CD8-positive, alpha-beta T cell (primary cell): ENCODE measurements at regions of chr1 and their contacts with region 1.

Region 1: GRCh38 chr1:12407050-12407961 is 177.5 kb downstream of the VPS13D start:
- DNase-seq: peak in 3 of 9 experiments; percentile 19 to 65 (median 50)
- ATAC-seq: peak; percentile 55
- H3K4me3 ChIP-seq: no peak overlapping the region
- H3K4me3 Mint-ChIP-seq: no peak overlapping the region
- H3K27ac ChIP-seq: no peak overlapping the region
- H3K27ac Mint-ChIP-seq: no peak overlapping the region
- H3K4me1 ChIP-seq: peaks cover 8% of the 10 kb centered on the region
- H3K4me1 Mint-ChIP-seq: peaks cover 20% of the 10 kb centered on the region
- H3K27me3 ChIP-seq: no peaks in the 10 kb centered on the region
- H3K27me3 Mint-ChIP-seq: no peaks in the 10 kb centered on the region
- CTCF ChIP-seq: peak; percentile 41

Region 2: GRCh38 chr1:12472798-12473551 is 65.7 kb after region 1 on chr1:
- CTCF ChIA-PET with region 1: interaction called, 10 read pairs
- POLR2A ChIA-PET with region 1: interaction called, 4 read pairs
- intact Hi-C with region 1: loop called in 1 of 2 experiments (anchors 10 kb)
- DNase-seq: peak; percentile 14 to 78 (median 68)
- ATAC-seq: peak; percentile 73
- H3K4me3 ChIP-seq: peak overlapping the region; percentile 6 to 25
- H3K4me3 Mint-ChIP-seq: peak overlapping the region; percentile 78
- H3K27ac ChIP-seq: peak overlapping the region; percentile 49 to 88
- H3K27ac Mint-ChIP-seq: peak overlapping the region; percentile 97
- H3K4me1 ChIP-seq: peaks cover 84% of the 10 kb centered on the region
- H3K4me1 Mint-ChIP-seq: peaks cover 90% of the 10 kb centered on the region
- H3K27me3 ChIP-seq: no peaks in the 10 kb centered on the region
- H3K27me3 Mint-ChIP-seq: no peaks in the 10 kb centered on the region
- CTCF ChIP-seq: no peak

Region 3: DNA sequence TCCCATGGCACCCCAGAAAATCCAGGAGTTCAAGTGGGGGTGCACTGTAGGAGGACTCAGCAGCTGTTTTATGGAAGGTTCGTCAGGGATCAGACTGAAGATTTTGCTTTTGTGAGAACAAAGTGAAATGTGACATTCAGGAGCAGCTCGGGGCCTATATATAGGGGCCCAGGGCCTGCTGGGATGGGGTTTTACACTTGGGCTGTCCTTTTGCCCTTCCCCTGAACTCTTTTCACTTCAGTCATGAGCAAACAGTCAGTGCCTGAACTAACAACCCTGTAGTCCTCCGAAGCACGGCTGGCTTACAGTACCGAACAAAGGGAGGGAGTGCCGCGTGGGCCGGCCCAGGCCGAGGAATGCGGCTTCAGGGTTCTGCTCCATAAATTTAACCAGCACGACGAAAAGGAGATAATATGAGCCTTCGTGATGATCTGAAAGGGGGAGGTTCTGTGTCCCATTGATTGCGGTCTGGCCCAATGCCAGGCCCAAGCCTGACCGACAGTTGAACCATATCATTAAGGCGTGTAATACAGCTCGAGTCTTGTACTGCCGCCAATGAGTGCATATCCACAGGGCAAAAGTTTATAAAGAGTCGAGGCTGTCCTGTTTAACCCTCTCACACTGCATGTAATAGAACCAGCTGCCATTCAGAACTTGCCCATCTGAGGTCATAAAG is 70.8 kb after region 1 on chr1:
- CTCF ChIA-PET with region 1: interaction called, 10 read pairs
- POLR2A ChIA-PET with region 1: interaction called, 4 read pairs
- intact Hi-C with region 1: loop called in 1 of 2 experiments (anchors 10 kb)
- DNase-seq: peak in 2 of 9 experiments; percentile 40 to 54
- ATAC-seq: peak; percentile 19
- H3K4me3 ChIP-seq: no peak overlapping the region
- H3K4me3 Mint-ChIP-seq: peak overlapping the region; percentile 72
- H3K27ac ChIP-seq: peak overlapping the region; percentile 6 to 63
- H3K27ac Mint-ChIP-seq: peak overlapping the region; percentile 97
- H3K4me1 ChIP-seq: peaks cover 90% of the 10 kb centered on the region
- H3K4me1 Mint-ChIP-seq: peaks cover 90% of the 10 kb centered on the region
- H3K27me3 ChIP-seq: no peaks in the 10 kb centered on the region
- H3K27me3 Mint-ChIP-seq: no peaks in the 10 kb centered on the region
- CTCF ChIP-seq: no peak

Region 4: DNA sequence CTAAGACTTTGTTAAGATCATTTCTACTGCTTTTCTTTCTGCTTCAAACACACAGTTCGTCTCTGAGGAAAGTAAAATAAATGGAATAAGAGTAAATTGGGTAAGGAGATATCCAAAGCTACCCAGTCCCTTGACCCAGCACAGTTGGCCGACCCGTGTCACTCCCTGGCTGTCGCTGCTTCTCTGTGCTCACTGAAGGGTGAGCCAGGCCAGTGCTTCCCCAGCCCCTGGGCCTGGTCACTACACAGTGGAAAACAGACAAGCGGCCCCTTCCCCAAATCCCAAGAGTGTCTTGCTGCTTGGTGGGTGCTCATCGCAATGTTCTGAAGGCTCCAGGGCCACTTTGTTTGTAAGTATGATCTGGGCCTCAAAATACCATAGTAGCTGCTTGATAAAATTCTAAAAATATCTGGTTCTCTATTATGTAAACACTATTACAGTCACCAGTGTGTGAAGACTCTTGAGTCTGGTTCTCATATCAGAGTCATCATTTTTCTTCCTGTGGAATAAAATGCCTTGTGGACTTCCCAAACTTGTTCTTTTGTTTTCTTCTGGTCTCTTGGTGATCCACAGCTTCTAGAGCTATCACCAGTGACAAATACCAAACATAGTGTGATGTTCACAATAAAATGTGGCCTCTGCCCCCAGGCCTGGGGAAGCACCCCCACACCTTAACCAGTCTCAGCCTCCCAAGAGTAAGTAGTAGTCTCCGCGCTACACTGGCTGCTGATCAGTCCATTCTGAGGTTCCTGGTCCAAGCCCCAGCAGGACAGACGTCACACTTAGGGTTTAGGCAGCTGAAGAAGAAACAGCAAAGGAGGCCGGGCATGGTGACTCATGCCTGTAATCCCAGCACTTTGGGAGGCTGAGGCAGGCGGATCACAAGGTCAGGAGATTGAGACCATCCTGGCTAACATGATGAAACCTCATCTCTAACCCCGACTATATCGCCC is 104.5 kb after region 1 on chr1:
- CTCF ChIA-PET with region 1: no interaction called
- POLR2A ChIA-PET with region 1: no interaction called
- intact Hi-C with region 1: loop called (anchors 5 to 10 kb)
- DNase-seq: no peak
- ATAC-seq: no peak
- H3K4me3 ChIP-seq: peak overlapping the region in 1 of 2 experiments; percentile 20
- H3K4me3 Mint-ChIP-seq: peak overlapping the region; percentile 75
- H3K27ac ChIP-seq: peak overlapping the region; percentile 64 to 77
- H3K27ac Mint-ChIP-seq: peak overlapping the region; percentile 98
- H3K4me1 ChIP-seq: peaks cover 34% of the 10 kb centered on the region
- H3K4me1 Mint-ChIP-seq: peaks cover 52% of the 10 kb centered on the region
- H3K27me3 ChIP-seq: no peaks in the 10 kb centered on the region
- H3K27me3 Mint-ChIP-seq: no peaks in the 10 kb centered on the region
- CTCF ChIP-seq: no peak

Region 5: DNA sequence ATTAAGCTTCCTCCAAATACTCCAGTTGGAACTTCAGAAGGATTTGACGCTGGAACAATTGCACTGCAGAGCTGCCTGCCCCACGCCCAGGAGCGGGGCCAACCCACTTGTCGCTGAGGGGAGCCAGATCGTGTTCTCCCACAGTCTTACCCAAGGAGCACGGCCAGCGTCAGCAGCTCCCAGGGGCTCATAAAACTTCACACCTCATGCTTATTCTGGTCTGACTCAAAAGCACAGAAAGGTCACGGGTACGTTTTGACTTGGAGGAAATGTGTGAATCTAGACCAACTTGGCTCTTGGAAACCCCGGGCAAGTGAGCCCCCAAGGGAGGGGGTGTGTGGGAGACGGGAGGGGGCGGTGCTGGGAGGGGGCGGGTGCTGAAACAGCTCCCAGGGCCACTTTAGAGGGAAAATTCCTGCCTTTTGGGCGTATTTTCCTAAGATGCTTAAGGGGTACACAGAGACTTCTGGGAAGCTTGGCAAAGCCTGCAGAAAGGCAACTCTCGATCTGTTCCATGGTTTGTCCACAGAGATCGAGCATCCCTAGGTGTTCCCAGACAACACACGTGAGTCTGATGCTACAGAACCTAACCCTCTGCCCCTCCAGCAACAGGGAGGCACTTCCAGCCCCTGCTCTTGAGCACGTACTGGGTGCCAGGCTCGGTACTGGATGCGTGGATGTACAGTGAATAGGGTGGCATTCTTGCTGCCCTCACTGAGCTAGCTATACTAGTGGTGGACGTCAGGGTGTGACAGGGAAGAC is 111.8 kb after region 1 on chr1:
- CTCF ChIA-PET with region 1: no interaction called
- POLR2A ChIA-PET with region 1: no interaction called
- intact Hi-C with region 1: loop called (anchors 5 to 10 kb)
- DNase-seq: peak in 2 of 9 experiments; percentile 14 to 27
- ATAC-seq: peak; percentile 46
- H3K4me3 ChIP-seq: no peak overlapping the region
- H3K4me3 Mint-ChIP-seq: no peak overlapping the region
- H3K27ac ChIP-seq: no peak overlapping the region
- H3K27ac Mint-ChIP-seq: no peak overlapping the region
- H3K4me1 ChIP-seq: no peaks in the 10 kb centered on the region
- H3K4me1 Mint-ChIP-seq: peaks cover 18% of the 10 kb centered on the region
- H3K27me3 ChIP-seq: no peaks in the 10 kb centered on the region
- H3K27me3 Mint-ChIP-seq: no peaks in the 10 kb centered on the region
- CTCF ChIP-seq: no peak

Region 6: DNA sequence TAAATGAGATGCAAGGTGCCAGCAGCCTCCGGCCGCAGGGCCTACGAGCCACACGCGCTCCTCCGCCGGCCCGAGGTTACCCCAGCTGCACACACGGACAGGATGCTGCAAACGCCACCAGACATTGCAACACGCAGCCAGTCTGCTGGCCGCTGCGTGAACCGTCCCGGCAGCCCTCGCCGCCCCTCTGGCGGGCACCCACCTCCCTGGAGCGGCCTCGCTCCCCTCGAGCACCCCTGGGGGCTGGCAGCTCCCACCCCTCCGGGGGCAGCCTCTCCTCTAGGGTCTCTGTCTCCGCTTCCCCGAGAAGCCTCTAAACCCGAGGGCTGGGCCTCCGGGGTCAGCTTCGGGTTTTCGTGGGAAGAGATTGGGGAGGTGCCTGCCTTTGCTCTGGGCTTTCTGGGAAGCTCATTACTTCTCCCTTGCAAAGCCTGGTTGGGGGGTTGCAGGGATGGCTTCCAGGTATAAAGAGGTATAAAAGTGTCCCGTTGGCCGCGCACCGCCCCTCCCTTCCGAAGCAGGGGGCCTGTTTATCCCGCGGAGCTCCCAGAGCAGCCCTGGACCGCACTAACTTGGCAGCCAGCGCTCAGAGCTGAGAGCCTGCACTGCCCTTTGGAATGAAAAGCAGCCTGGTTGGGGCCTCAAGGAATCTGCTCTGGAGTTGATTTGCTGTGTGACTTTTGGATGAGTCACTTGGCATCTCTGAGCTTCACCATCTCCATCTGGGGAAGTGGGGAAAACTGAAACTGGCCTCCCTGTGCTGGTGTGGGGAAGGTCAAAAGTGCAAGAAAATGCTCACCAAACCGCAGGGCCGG is 188.9 kb after region 1 on chr1:
- CTCF ChIA-PET with region 1: interaction called, 13 read pairs
- POLR2A ChIA-PET with region 1: interaction called, 4 read pairs
- intact Hi-C with region 1: loop called in 1 of 2 experiments (anchors 1 kb)
- DNase-seq: peak in 4 of 9 experiments; percentile 31 to 54 (median 37)
- ATAC-seq: peak; percentile 7
- H3K4me3 ChIP-seq: no peak overlapping the region
- H3K4me3 Mint-ChIP-seq: peak overlapping the region; percentile 56
- H3K27ac ChIP-seq: no peak overlapping the region
- H3K27ac Mint-ChIP-seq: peak overlapping the region; percentile 49
- H3K4me1 ChIP-seq: peaks cover 20% of the 10 kb centered on the region
- H3K4me1 Mint-ChIP-seq: peaks cover 42% of the 10 kb centered on the region
- H3K27me3 ChIP-seq: no peaks in the 10 kb centered on the region
- H3K27me3 Mint-ChIP-seq: no peaks in the 10 kb centered on the region
- CTCF ChIP-seq: no peak

Region 7: DNA sequence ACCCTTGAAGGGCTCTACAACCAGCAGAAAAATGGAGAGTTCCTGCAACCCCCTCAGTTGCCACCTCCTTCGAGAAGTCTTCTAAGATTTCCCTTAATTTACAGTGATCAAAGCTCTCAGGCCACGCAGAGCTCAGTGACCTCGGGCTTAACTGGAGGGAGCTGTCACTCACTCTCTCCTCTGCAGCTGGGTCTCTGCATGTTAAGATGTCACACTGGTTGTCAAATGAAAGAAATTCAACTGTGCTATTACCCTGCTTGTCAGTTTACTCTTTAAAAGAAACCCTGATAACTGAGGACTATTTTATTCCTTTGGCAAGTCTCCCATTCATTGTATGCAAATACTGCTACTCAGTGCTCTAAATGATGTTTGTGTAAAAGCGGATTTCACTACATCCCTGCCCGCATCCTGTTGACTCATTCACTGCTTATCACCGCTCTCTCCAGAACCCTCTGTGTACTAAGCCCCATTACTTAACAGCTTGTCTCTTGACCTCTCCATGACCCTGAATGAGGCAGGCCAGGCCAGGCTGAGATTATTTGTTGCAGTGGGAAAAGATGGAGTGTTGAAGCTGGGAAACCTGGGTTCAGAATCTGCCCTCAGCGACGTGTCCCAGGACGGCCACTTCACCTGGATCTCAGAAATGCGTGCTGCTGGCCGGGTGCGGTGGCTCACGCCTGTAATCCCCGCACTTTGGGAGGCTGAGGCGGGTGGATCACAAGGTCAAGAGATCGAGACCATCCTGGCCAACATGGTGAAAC is 197.0 kb after region 1 on chr1:
- CTCF ChIA-PET with region 1: interaction called, 8 read pairs
- POLR2A ChIA-PET with region 1: interaction called, 4 read pairs
- intact Hi-C with region 1: loop called in 1 of 2 experiments (anchors 1 kb)
- DNase-seq: peak in 8 of 9 experiments; percentile 47 to 87 (median 72)
- ATAC-seq: peak; percentile 91
- H3K4me3 ChIP-seq: no peak overlapping the region
- H3K4me3 Mint-ChIP-seq: peak overlapping the region; percentile 50
- H3K27ac ChIP-seq: peak overlapping the region; percentile 22 to 59
- H3K27ac Mint-ChIP-seq: peak overlapping the region; percentile 95
- H3K4me1 ChIP-seq: peaks cover 36% of the 10 kb centered on the region
- H3K4me1 Mint-ChIP-seq: peaks cover 63% of the 10 kb centered on the region
- H3K27me3 ChIP-seq: no peaks in the 10 kb centered on the region
- H3K27me3 Mint-ChIP-seq: no peaks in the 10 kb centered on the region
- CTCF ChIP-seq: no peak